ENCODE measurements at regions of chr18 and their contacts with region 1.

Region 1: DNA sequence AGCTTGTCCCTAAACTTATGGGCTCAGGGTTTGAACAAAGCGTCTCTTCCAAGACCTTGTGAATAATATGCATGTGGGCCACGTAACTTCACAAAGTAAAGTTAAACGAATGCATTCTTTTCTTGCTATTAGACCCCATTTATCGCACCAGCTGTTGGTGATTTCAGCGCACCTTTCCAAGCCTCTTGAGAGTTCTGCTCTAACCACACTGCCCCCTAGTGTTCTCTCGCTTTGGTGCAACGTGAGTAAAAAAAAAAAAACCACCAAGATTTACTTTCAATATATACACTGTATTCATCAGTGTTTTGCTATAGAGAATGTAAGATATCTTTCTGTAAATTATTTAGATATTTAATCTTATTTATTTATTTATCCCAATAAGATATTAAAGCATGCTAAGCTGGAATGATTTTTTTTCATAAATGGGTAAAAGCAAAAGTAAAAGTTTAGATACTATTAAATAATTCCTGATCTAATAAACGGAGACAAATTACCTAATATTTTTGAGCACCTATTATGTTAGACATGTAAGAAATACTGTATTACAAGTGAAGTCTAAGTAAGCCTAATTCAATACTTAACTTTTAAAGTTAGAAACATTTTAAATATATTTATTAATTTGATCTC is 459.5 kb downstream of the DLGAP1 start:
- DNase-seq: peak; percentile 56
- ATAC-seq: peak; percentile 35; the same call in 1 of the 3 replicates
- H3K4me3 ChIP-seq: no peak overlapping the region
- H3K27ac ChIP-seq: no peak overlapping the region
- H3K4me1 ChIP-seq: no peaks in the 10 kb centered on the region
- H3K27me3 ChIP-seq: peaks cover 0 to 6% of the 10 kb centered on the region in 2 experiments; a peak in 1 of 5 replicates
- CTCF ChIP-seq: peak; percentile 67
- EP300 ChIP-seq: no peak
- POLR2A ChIP-seq: no peak
- RAD21 ChIP-seq: no peak

Region 2: GRCh38 chr18:3422905-3423304 is 572.7 kb before region 1 on chr18:
- CTCF ChIA-PET with region 1: no interaction called
- POLR2A ChIA-PET with region 1: no interaction called
- in situ Hi-C with region 1: no loop called
- intact Hi-C with region 1: no loop called
- DNase-seq: no peak
- ATAC-seq: no peak
- H3K4me3 ChIP-seq: no peak overlapping the region
- H3K27ac ChIP-seq: no peak overlapping the region
- H3K4me1 ChIP-seq: no peaks in the 10 kb centered on the region
- H3K27me3 ChIP-seq: no peaks in the 10 kb centered on the region
- CTCF ChIP-seq: no peak
- EP300 ChIP-seq: no peak
- POLR2A ChIP-seq: no peak
- RAD21 ChIP-seq: no peak

Region 3: GRCh38 chr18:3703732-3704176 is 291.8 kb before region 1 on chr18:
- CTCF ChIA-PET with region 1: interaction called, 3 read pairs
- POLR2A ChIA-PET with region 1: no interaction called
- in situ Hi-C with region 1: no loop called
- intact Hi-C with region 1: loop called (anchors 1 kb)
- DNase-seq: peak; percentile 41
- ATAC-seq: peak; percentile 85
- H3K4me3 ChIP-seq: no peak overlapping the region
- H3K27ac ChIP-seq: no peak overlapping the region
- H3K4me1 ChIP-seq: peaks cover 11% of the 10 kb centered on the region
- H3K27me3 ChIP-seq: no peaks in the 10 kb centered on the region; a peak in 1 of 5 replicates
- CTCF ChIP-seq: peak; percentile 73
- EP300 ChIP-seq: no peak
- POLR2A ChIP-seq: no peak
- RAD21 ChIP-seq: peak; percentile 17; the same call in 1 of the 2 replicates

Region 4: GRCh38 chr18:3771121-3771971 is 224.2 kb before region 1 on chr18:
- CTCF ChIA-PET with region 1: interaction called, 12 read pairs
- POLR2A ChIA-PET with region 1: no interaction called
- in situ Hi-C with region 1: no loop called
- intact Hi-C with region 1: loop called (anchors 1 kb)
- DNase-seq: peak; percentile 48
- ATAC-seq: peak; percentile 100
- H3K4me3 ChIP-seq: no peak overlapping the region
- H3K27ac ChIP-seq: no peak overlapping the region
- H3K4me1 ChIP-seq: no peaks in the 10 kb centered on the region
- H3K27me3 ChIP-seq: peaks cover 0 to 18% of the 10 kb centered on the region in 2 experiments; a peak in 2 of 5 replicates
- CTCF ChIP-seq: peak; percentile 93
- EP300 ChIP-seq: no peak
- POLR2A ChIP-seq: no peak
- RAD21 ChIP-seq: peak; percentile 90

Region 5: GRCh38 chr18:3960977-3961376 is 34.6 kb before region 1 on chr18:
- CTCF ChIA-PET with region 1: no interaction called
- POLR2A ChIA-PET with region 1: no interaction called
- in situ Hi-C with region 1: no loop called
- intact Hi-C with region 1: loop called (anchors 1 kb)
- DNase-seq: no peak
- ATAC-seq: no peak
- H3K4me3 ChIP-seq: no peak overlapping the region
- H3K27ac ChIP-seq: no peak overlapping the region
- H3K4me1 ChIP-seq: no peaks in the 10 kb centered on the region
- H3K27me3 ChIP-seq: peaks cover 0 to 6% of the 10 kb centered on the region in 2 experiments; a peak in 1 of 5 replicates
- CTCF ChIP-seq: no peak
- EP300 ChIP-seq: no peak
- POLR2A ChIP-seq: no peak
- RAD21 ChIP-seq: no peak

Region 6: GRCh38 chr18:4106407-4107033 is 110.9 kb after region 1 on chr18:
- CTCF ChIA-PET with region 1: no interaction called
- POLR2A ChIA-PET with region 1: no interaction called
- in situ Hi-C with region 1: no loop called
- intact Hi-C with region 1: no loop called
- DNase-seq: peak; percentile 49
- ATAC-seq: peak; percentile 80
- H3K4me3 ChIP-seq: no peak overlapping the region
- H3K27ac ChIP-seq: no peak overlapping the region
- H3K4me1 ChIP-seq: no peaks in the 10 kb centered on the region
- H3K27me3 ChIP-seq: no peaks in the 10 kb centered on the region
- CTCF ChIP-seq: peak; percentile 82
- EP300 ChIP-seq: no peak
- POLR2A ChIP-seq: no peak
- RAD21 ChIP-seq: no peak

Region 7: GRCh38 chr18:4299395-4299794 is 303.8 kb after region 1 on chr18:
- CTCF ChIA-PET with region 1: no interaction called
- POLR2A ChIA-PET with region 1: no interaction called
- in situ Hi-C with region 1: no loop called
- intact Hi-C with region 1: no loop called
- DNase-seq: no peak
- ATAC-seq: no peak
- H3K4me3 ChIP-seq: no peak overlapping the region
- H3K27ac ChIP-seq: no peak overlapping the region
- H3K4me1 ChIP-seq: no peaks in the 10 kb centered on the region
- H3K27me3 ChIP-seq: no peaks in the 10 kb centered on the region
- CTCF ChIP-seq: no peak
- EP300 ChIP-seq: no peak
- POLR2A ChIP-seq: no peak
- RAD21 ChIP-seq: no peak